GM12878 (cell line): ENCODE measurements at regions of chr2 and their contacts with region 1.

Region 1: GRCh38 chr2:122610948-122611609 is 855.6 kb downstream of the TSN start:
- DNase-seq: peak; percentile 5
- ATAC-seq: peak; percentile 91
- H3K4me3 ChIP-seq: no peak overlapping the region
- H3K27ac ChIP-seq: no peak overlapping the region
- H3K4me1 ChIP-seq: no peaks in the 10 kb centered on the region
- H3K27me3 ChIP-seq: no peaks in the 10 kb centered on the region
- CTCF ChIP-seq: no peak
- EP300 ChIP-seq: no peak
- POLR2A ChIP-seq: no peak
- RAD21 ChIP-seq: no peak

Region 2: GRCh38 chr2:122627388-122627787 is 16.3 kb after region 1 on chr2:
- CTCF ChIA-PET with region 1: interaction called, 12 read pairs
- POLR2A ChIA-PET with region 1: no interaction called
- RAD21 ChIA-PET with region 1: interaction called, 6 read pairs
- SMC1A ChIA-PET with region 1: interaction called, 4 read pairs
- in situ Hi-C with region 1: no loop called
- intact Hi-C with region 1: no loop called
- DNase-seq: no peak
- ATAC-seq: no peak
- H3K4me3 ChIP-seq: no peak overlapping the region
- H3K27ac ChIP-seq: no peak overlapping the region
- H3K4me1 ChIP-seq: no peaks in the 10 kb centered on the region
- H3K27me3 ChIP-seq: no peaks in the 10 kb centered on the region
- CTCF ChIP-seq: no peak
- EP300 ChIP-seq: no peak
- POLR2A ChIP-seq: no peak
- RAD21 ChIP-seq: no peak